ENCODE measurements at regions of chr10 and their contacts with region 1.

Region 1: GRCh38 chr10:58299580-58299979 is 30.6 kb downstream of the CISD1 start:
- DNase-seq: peak; percentile 85
- H3K4me3 Mint-ChIP-seq: no peak overlapping the region
- H3K27ac Mint-ChIP-seq: no peak overlapping the region
- H3K4me1 Mint-ChIP-seq: peaks cover 2% of the 10 kb centered on the region
- H3K27me3 Mint-ChIP-seq: peaks cover 19% of the 10 kb centered on the region

Region 2: DNA sequence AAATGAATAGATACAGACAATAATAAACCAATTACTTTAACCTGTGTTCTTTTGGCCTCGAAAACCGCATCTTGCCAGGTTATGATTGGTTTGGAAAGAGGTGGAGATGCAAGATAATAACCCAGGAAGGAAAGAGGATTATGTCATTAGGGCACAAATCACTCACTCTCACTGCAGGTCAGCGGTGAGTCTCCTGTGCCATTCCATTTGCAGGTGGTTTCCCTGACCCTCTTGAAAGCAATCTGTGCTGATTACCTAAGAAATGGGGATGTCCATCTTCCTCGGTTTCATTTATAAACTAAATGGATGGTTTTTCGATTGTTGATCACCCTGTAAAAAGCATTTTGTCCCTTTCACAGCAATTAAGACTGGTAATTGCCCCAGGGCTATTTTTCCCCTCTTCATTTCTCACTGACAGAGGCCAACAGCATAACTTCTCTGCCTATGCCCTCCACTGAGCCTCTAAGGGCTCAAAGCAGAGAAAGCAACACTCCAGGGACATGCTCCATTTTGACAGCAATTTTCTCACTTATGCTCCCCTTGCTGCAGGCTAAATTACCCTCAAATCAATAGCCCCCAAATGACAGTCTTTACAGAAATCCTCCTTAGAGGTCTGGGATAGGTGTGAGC is 289.4 kb before region 1 on chr10:
- intact Hi-C with region 1: no loop called
- DNase-seq: no peak
- H3K4me3 Mint-ChIP-seq: no peak overlapping the region
- H3K27ac Mint-ChIP-seq: no peak overlapping the region
- H3K4me1 Mint-ChIP-seq: no peaks in the 10 kb centered on the region
- H3K27me3 Mint-ChIP-seq: no peaks in the 10 kb centered on the region

Region 3: DNA sequence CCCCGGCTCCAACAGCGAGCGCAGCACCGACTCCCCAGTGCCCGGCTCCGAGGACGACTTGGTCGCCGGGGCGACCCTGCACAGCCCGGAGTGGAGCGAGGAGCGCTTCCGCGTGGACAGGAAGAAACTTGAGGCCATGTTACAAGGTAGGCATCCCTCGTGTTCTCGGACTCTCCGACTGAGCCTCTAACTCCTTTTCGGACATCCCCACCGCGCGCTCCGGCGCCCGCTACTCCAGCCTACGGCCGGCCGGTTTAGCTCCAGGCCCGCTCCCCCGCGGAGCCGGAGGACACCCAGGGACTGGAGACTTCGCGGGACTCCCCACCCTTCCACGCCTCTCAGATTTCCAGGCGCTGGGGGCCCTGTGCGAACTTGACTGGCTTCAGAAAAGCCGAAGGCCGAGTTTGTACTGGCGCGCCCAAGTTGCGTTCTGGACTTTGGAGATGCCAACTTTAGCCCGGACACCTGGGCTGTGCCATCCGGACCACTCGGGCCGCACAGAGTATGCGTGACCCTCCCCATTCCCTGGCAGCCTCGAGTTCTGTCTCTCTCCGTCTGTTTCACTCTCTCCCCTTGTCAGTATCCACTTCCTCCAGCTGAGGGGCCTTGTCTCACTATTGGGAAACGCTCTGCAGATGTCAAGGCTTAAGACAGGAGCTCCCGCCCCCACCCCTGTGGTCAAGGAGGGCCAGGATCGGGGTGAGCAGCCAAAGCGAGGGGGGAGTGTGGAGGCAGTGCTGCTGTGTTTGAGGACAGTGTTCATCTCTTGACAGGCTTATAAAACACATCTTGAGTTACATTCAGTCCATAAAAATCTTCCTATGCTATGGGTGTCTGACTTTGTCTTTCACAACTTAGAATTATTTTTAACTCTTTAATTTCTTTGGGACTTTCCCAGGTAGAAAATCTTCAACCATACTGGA is 213.9 kb after region 1 on chr10:
- intact Hi-C with region 1: loop called (anchors 10 kb)
- DNase-seq: no peak
- H3K4me3 Mint-ChIP-seq: peak overlapping the region; percentile 54
- H3K27ac Mint-ChIP-seq: no peak overlapping the region
- H3K4me1 Mint-ChIP-seq: peaks cover 3% of the 10 kb centered on the region
- H3K27me3 Mint-ChIP-seq: peaks cover 48% of the 10 kb centered on the region

Region 4: GRCh38 chr10:58867683-58868082 is 568.1 kb after region 1 on chr10:
- intact Hi-C with region 1: no loop called
- DNase-seq: no peak
- H3K4me3 Mint-ChIP-seq: no peak overlapping the region
- H3K27ac Mint-ChIP-seq: no peak overlapping the region
- H3K4me1 Mint-ChIP-seq: no peaks in the 10 kb centered on the region
- H3K27me3 Mint-ChIP-seq: no peaks in the 10 kb centered on the region